PC-3 (cell line): ENCODE measurements at regions of chr5 and their contacts with region 1.

Region 1: DNA sequence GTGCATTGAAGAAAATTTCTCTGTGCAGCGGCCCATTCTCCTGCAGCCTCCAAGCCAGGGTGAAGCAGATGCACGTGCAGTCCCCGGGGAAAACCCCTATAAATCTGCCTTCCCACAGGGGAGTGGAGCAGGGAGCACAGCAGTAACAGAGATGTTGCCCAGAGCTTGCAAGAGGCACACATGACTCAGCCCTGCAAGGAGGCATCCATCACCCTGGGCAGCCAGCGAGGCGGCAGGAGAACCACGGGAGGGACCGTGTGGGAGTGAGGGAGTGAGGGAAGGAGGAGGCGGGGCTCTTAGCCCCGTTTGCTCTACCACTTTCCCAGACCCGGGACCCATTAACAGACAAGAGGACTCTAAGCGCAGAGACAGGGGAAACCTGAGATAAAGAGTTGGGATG is 96.2 kb upstream of the ARAP3 start:
- DNase-seq: no peak
- ATAC-seq: no peak
- H3K4me3 ChIP-seq: no peak overlapping the region
- H3K27ac ChIP-seq: no peak overlapping the region
- H3K4me1 ChIP-seq: peaks cover 3% of the 10 kb centered on the region; the same call in 1 of the 2 replicates
- H3K27me3 ChIP-seq: no peaks in the 10 kb centered on the region
- CTCF ChIP-seq: no peak

Region 2: DNA sequence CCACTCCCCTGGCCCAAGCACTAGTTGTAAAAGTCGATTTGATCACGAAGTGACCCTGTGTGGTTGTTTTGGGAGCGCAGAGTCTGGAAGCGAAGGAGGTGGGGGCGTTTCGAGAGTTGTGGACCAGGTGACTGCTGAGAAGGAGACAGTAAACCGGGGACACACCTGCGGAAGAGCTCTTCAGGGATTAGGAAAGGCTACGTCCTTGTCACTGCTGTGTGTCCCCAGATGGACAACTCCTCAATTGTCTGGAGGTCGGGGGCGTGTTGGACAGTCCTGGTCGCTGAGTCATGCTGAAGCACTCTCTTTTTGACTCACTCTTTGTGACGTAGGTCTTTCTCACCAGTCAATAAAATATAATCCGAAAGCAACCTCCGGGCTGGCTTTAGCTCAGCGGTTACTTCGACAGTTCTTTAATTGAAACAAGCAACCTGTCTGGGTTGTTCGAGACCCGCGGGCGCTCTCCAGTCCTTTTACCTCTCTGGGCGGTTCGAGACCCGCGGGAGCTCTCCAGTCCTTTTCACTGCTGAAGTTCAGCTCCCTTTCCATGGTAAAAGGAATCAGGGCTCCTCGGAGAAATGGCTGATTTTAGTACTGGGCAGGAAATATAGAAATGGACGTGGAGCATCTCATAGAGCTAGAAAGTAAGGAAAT is 1067.2 kb before region 1 on chr5:
- CTCF ChIA-PET with region 1: no interaction called
- POLR2A ChIA-PET with region 1: no interaction called
- intact Hi-C with region 1: no loop called
- DNase-seq: peak; percentile 99
- ATAC-seq: peak; percentile 94
- H3K4me3 ChIP-seq: peak overlapping the region; percentile 91
- H3K27ac ChIP-seq: peak overlapping the region; percentile 85
- H3K4me1 ChIP-seq: peaks cover 8% of the 10 kb centered on the region; the same call in 1 of the 2 replicates
- H3K27me3 ChIP-seq: no peaks in the 10 kb centered on the region
- CTCF ChIP-seq: no peak

Region 3: GRCh38 chr5:141825791-141826560 is 47.8 kb after region 1 on chr5:
- CTCF ChIA-PET with region 1: no interaction called
- POLR2A ChIA-PET with region 1: no interaction called
- intact Hi-C with region 1: no loop called
- DNase-seq: peak; percentile 22
- ATAC-seq: peak; percentile 35; the same call in 1 of the 2 replicates
- H3K4me3 ChIP-seq: no peak overlapping the region
- H3K27ac ChIP-seq: no peak overlapping the region
- H3K4me1 ChIP-seq: no peaks in the 10 kb centered on the region
- H3K27me3 ChIP-seq: no peaks in the 10 kb centered on the region
- CTCF ChIP-seq: peak; percentile 54

Region 4: GRCh38 chr5:141903261-141903660 is 125.1 kb after region 1 on chr5:
- CTCF ChIA-PET with region 1: no interaction called
- POLR2A ChIA-PET with region 1: interaction called, 16 read pairs
- intact Hi-C with region 1: no loop called
- DNase-seq: no peak
- ATAC-seq: no peak
- H3K4me3 ChIP-seq: no peak overlapping the region
- H3K27ac ChIP-seq: no peak overlapping the region
- H3K4me1 ChIP-seq: no peaks in the 10 kb centered on the region
- H3K27me3 ChIP-seq: no peaks in the 10 kb centered on the region
- CTCF ChIP-seq: no peak